ENCODE measurements at regions of chr2 and their contacts with region 1.

Region 1: GRCh38 chr2:85538486-85539360 is at the start of gene MAT2A:
- DNase-seq: peak; percentile 47
- H3K4me3 ChIP-seq: peak within 1 kb of the TSS; percentile 99
- CTCF ChIP-seq: peak; percentile 87

Region 2: DNA sequence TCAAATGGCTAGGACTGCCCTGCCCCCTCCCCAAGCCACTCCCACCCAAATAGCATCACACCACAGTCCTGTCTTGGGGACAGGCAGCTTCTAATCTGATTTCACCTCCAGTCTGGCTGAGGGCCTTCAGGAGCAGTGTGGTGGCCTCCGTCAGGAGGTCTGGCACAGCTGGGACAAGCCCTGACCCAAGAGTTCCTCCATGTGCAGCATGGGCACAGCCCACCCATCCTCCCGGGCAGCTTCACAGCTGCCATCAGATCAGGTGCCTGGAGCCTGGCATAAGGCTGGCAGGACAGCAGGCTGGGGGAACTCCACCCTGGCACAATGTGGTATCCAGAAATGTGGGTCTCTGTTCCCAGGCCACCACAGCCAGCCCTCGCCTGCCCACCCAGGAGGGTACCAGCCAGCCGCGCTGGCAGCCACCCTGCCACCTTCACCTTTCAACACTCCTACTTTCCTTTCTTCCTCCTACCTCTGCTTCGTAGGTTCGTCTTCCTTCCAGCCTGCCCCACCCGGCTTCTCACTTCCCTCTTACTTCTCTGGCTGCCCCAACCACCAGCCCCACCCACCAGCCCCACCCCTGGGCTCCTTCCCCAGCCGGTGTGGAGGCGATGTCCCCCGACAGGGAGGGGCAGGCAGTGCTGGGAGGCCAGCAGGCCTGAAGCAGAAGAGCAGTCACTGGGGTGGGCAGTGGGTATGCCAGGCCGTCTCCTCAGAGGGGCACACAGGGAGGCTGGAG is 128.7 kb before region 1 on chr2 and contains the start of gene CAPG:
- CTCF ChIA-PET with region 1: no interaction called
- POLR2A ChIA-PET with region 1: interaction called, 11 read pairs
- DNase-seq: no peak
- H3K4me3 ChIP-seq: no peak within 1 kb of the TSS
- CTCF ChIP-seq: no peak

Region 3: GRCh38 chr2:85430752-85431569 is 107.8 kb before region 1 on chr2:
- CTCF ChIA-PET with region 1: interaction called, 922 read pairs
- POLR2A ChIA-PET with region 1: interaction called, 47 read pairs
- DNase-seq: no peak
- H3K4me3 ChIP-seq: no peak overlapping the region
- CTCF ChIP-seq: no peak

Region 4: DNA sequence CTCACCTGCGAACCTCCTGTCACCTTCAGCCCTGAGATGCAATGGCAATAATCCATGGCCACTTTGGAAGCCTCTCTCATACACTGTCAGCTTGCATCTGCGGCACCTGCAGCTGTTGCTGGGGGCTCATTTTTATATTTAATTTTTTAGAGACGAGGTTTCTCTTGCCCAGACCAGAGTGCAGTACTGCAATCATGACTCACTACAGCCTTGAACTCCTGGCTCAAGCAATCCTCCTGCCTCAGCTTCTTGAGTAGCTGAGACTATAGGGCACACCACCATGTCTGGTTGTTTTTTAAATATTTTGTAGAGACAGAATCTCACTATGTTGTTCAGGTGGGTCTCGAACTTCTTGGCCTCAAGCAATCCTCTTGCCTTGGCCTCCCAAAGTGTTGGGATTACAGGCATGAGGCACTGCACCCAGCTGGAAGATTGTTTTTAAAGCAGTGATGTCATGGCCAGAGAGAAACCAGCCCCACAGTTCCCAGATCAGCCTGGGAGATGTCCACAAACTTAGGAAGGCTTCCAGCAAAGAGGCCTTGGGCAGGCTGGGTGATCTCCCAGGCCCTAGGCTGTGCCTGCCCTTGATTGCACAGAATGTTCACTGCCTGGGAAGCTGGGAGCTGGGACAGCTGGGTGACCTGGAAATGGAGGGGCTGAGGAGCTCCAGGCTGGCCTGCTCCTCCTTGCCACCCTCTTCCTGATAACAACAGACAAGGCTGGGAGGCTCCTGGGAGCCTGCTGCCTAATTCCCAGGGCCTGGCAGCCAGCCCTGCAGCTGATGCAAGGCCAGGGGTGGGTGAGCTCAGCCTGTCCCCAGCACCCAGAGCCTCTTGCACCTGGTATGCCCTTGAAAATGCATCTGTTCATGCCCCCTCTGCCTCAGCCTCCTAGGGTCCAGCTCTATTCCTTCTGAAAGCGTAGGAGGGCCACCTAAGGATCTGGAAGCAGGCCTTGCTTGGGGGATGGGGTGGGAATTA is 93.1 kb before region 1 on chr2:
- CTCF ChIA-PET with region 1: interaction called, 922 read pairs
- POLR2A ChIA-PET with region 1: interaction called, 45 read pairs
- DNase-seq: peak; percentile 50
- H3K4me3 ChIP-seq: no peak overlapping the region
- CTCF ChIP-seq: no peak

Region 5: DNA sequence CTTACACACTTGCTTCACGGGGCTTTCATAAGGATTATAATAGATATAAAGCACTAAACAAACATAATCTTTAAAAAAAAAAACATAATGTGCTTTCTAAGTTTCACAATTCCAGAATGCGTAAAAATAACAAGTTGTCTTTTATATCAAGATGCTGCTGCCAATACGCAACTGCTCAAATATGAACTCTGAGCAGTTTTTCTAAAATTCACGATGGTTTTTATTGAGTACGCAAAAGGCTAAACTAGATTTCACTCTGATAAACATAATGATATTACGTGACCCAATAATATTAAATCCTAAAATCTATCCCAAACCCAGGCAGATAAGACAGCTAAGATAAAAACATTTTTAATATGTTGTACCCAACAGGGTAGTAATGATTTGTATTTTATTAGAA is 24.4 kb before region 1 on chr2:
- CTCF ChIA-PET with region 1: interaction called, 4 read pairs
- POLR2A ChIA-PET with region 1: interaction called, 10 read pairs
- DNase-seq: no peak
- H3K4me3 ChIP-seq: no peak overlapping the region
- CTCF ChIP-seq: no peak

Region 6: GRCh38 chr2:85551698-85552678 is 13.3 kb after region 1 on chr2:
- CTCF ChIA-PET with region 1: interaction called, 104 read pairs
- POLR2A ChIA-PET with region 1: interaction called, 98 read pairs
- DNase-seq: no peak
- H3K4me3 ChIP-seq: no peak overlapping the region
- CTCF ChIP-seq: peak; percentile 81

Region 7: DNA sequence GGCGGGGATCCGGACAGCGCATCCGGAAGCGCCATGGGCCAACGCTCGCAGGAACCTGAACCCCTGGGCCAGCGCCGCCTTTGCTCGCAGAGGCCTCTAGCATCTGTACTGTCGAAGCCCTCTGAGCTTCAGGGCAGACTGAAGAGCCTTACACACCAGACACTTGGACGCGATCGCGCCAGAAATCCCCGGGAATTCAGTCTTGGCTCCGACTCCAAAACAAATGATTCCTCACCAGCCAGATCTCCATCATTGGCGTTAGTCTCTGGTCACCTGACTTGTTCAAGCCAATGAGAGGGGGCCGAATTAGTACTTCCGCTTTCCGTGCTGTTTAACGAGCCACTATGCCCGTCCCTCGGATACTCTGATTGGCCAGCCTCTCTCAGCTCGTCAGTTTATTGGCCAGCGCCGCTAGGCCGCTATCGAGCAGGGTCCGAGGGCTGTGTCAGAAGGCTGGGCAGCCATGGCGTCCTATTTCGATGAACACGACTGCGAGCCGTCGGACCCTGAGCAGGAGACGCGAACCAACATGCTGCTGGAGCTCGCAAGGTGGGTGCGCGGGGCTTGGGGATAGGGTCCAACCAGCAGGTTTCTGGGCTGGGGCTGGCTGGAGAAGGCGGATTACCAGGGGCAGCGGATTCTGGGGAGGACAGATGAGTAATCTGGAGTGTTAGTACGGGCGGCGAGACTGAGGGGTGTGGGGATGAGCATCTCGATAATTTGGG is 56.7 kb after region 1 on chr2 and contains the start of gene RNF181:
- CTCF ChIA-PET with region 1: interaction called, 3 read pairs
- POLR2A ChIA-PET with region 1: interaction called, 25 read pairs
- DNase-seq: peak; percentile 97
- H3K4me3 ChIP-seq: peak within 1 kb of the TSS; percentile 100
- CTCF ChIP-seq: no peak

Region 8: GRCh38 chr2:85765081-85765731 is 226.5 kb after region 1 on chr2:
- CTCF ChIA-PET with region 1: no interaction called
- POLR2A ChIA-PET with region 1: no interaction called
- DNase-seq: no peak
- H3K4me3 ChIP-seq: no peak overlapping the region
- CTCF ChIP-seq: no peak